GM23248 (cell line): ENCODE measurements at regions of chr15 and their contacts with region 1.

Region 1: DNA sequence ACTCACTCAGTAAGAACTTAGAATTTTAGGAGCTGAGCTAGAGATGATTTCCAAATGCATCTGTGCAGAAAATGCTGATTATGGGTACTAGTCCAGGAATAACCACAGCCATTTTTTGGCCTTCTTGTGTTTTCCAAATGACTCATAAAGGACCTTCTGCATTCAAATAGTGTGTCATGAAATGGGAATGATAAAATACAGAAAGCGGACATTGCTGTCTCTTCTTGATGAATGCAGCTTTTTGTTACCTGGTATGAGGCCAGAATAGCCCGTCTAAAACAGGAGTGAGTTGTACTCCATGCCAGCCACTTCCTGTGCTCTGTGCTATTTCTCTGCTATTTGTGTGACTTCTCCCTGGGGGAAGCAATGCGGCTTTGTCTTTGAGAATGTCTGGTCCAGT is 20.5 kb upstream of the FRMD5 start:
- DNase-seq: peak; percentile 96
- H3K4me3 ChIP-seq: no peak overlapping the region
- H3K27ac ChIP-seq: peak overlapping the region; percentile 29; the same call in 1 of the 2 replicates
- H3K4me1 ChIP-seq: peaks cover 9% of the 10 kb centered on the region
- H3K27me3 ChIP-seq: no peaks in the 10 kb centered on the region

Region 2: GRCh38 chr15:43854801-43855200 is 360.8 kb before region 1 on chr15:
- in situ Hi-C with region 1: no loop called
- DNase-seq: peak; percentile 48
- H3K4me3 ChIP-seq: no peak overlapping the region
- H3K27ac ChIP-seq: no peak overlapping the region
- H3K4me1 ChIP-seq: no peaks in the 10 kb centered on the region
- H3K27me3 ChIP-seq: no peaks in the 10 kb centered on the region

Region 3: GRCh38 chr15:43872416-43873020 is 343.1 kb before region 1 on chr15:
- in situ Hi-C with region 1: loop called (anchors 10 kb)
- DNase-seq: peak; percentile 89
- H3K4me3 ChIP-seq: no peak overlapping the region
- H3K27ac ChIP-seq: no peak overlapping the region
- H3K4me1 ChIP-seq: no peaks in the 10 kb centered on the region
- H3K27me3 ChIP-seq: no peaks in the 10 kb centered on the region

Region 4: DNA sequence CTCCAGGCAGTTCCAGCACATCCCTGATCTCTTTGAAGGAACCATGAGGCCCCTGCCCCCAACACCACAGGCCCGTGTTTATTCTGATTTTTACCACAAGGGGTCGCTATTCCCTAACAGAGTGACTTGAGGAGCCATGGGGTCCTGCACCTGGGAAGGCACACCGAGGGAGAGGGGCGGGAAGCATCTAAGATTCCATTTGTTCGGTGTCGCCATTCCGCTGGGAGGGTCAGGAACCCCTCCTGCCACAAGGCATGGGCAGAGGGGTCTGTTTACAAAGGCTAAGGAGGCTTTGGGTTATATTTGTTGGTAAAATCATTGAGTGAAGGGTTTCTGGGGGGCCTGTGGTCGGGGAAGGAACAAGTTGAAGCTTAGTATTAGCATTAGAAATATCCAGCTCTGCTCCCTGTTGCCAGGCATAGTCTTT is 311.7 kb before region 1 on chr15:
- in situ Hi-C with region 1: loop called (anchors 10 kb)
- DNase-seq: peak; percentile 65
- H3K4me3 ChIP-seq: no peak overlapping the region
- H3K27ac ChIP-seq: no peak overlapping the region
- H3K4me1 ChIP-seq: no peaks in the 10 kb centered on the region
- H3K27me3 ChIP-seq: no peaks in the 10 kb centered on the region

Region 5: DNA sequence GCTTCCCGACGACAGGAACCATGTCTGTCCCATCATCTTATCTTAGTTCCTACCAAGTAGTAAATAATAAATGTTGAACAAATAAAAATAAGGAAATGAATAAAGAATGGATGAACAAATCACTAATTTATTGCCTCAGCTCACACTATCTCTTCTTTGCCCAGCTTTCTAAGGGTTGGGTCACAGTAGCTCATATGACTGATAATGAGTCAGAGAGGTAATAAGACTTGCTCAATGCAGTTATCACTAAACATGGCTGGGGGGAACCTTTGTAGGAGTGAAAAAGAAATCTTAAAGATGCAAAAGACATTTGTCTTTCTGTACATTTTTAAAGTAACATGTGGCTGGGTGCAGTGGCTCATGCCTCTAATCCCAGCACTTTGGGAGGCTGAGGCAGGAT is 206.5 kb before region 1 on chr15:
- in situ Hi-C with region 1: no loop called
- DNase-seq: peak; percentile 82
- H3K4me3 ChIP-seq: no peak overlapping the region
- H3K27ac ChIP-seq: no peak overlapping the region
- H3K4me1 ChIP-seq: peaks cover 18% of the 10 kb centered on the region
- H3K27me3 ChIP-seq: no peaks in the 10 kb centered on the region